Colonic mucosa (tissue), 4 donors: ENCODE measurements at regions of chr1 and their contacts with region 1.

Region 1: GRCh38 chr1:116570358-116571200 is at the start of gene CD58:
- DNase-seq: peak; percentile 93
- H3K4me3 ChIP-seq: peak within 1 kb of the TSS; percentile 66
- H3K27ac ChIP-seq: peak within 1 kb of the TSS; percentile 96
- H3K4me1 ChIP-seq: peaks cover 4% of the 10 kb centered on the region
- H3K27me3 ChIP-seq: no peaks in the 10 kb centered on the region
- CTCF ChIP-seq: peak; percentile 71
- total RNA-seq, gene CD58: 16.1 to 25.9 TPM

Region 2: DNA sequence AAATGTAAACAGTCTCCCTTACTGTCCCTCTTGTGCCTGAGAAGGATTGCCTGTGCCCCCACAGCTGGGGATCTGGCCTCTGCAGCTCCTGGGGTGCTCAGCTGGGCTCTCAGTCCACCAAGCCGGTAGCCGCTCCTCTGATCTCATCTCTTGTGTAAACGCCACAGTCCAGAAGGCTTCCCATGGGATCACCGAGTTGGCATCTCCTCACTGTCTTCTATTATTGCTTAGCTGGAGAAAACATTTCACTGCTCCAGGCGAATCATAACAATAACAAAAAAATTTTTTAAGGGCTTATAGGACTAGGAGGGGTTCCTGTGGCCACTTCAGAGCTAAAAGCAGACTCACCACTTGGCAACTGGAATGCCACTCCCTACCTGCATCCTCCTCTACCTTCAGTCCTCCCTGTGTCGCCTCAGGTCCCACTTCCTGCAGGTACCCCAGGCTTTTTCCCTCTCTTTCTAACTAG is 121.7 kb before region 1 on chr1:
- intact Hi-C with region 1: no loop called
- DNase-seq: no peak
- H3K4me3 ChIP-seq: no peak overlapping the region
- H3K27ac ChIP-seq: no peak overlapping the region
- H3K4me1 ChIP-seq: no peaks in the 10 kb centered on the region
- H3K27me3 ChIP-seq: no peaks in the 10 kb centered on the region
- CTCF ChIP-seq: no peak

Region 3: DNA sequence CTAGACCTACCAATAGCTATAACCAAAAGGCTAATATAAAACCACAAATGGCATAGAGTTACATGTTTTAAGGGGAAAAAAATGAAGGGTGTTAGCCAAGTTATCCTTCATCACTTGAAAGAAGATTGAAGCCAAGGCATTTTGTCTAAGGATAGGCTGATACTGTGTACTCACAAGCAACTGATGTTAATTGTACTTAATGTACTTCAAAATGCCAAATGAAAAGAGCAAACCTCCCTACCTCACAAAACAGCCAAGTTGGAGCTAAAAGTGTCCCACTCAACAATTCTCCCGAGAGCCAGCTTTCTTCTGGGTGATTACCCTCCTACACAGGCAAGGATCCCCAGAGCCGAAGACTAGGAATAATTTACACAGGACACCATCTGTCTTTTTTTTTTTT is 101.3 kb after region 1 on chr1:
- intact Hi-C with region 1: loop called (anchors 2 kb)
- DNase-seq: no peak
- H3K4me3 ChIP-seq: no peak overlapping the region
- H3K27ac ChIP-seq: no peak overlapping the region
- H3K4me1 ChIP-seq: no peaks in the 10 kb centered on the region
- H3K27me3 ChIP-seq: no peaks in the 10 kb centered on the region
- CTCF ChIP-seq: no peak

Region 4: DNA sequence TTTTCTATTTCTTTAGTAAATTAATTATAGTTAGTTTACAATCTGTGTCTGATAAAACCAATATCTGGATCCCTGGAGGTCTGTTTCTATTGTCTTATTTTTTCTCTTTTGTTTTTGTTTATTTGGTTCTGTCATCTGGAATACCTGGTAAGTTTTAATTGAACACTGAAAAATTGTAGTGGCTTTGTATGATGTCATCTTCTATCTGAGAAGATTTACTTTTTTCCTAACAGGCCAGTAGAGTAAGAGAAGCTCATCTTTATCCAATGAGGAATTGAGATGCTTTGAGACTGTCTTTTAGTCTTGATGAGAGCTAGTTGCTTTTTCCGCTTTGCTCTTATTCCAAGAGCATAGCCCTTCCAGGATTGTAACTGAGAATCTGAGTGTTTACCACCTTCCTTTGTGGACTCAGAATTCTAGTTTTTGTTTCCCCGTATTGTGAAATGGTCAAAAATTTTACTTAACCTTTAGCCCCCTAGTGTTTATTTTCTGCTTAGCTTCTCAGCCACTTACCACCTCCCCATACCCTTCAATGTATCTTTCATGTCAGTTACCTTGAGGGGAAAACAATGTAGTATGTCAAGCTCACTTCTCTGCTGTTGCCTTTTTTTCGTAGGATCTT is 364.1 kb after region 1 on chr1:
- intact Hi-C with region 1: no loop called
- DNase-seq: no peak
- H3K4me3 ChIP-seq: no peak overlapping the region
- H3K27ac ChIP-seq: no peak overlapping the region
- H3K4me1 ChIP-seq: peaks cover 2% of the 10 kb centered on the region
- H3K27me3 ChIP-seq: no peaks in the 10 kb centered on the region
- CTCF ChIP-seq: no peak